ENCODE measurements at regions of chr17 and their contacts with region 1.

Region 1: DNA sequence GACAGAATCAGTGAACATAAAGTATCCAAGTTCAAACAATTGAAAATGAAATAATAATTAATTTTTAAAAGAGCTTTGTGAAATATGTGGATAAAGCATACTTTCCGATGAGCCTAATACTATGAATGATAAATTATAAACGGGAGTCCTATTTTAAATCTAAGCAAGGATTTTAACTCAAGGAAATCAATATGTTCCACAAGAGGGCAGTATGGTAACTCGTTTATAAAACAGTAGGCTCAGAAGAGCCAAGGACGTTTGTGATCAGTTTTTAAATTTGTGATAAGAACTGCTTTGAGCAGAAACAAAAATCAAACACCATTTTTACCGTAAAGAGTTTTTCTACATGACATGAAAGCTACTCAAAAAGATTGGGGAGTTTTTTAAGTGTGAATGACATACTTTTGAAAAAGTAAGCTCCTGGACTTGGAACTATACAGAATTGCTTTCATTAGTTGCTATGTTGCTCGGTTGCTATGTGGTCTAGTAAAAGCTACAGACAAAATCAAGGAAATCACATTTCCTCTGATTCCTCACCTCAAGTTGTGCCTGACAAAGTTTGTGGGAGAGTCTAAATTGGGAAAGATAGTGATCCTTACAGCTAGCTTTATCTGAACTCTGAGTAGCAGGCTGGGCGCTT is 11.8 kb upstream of the TEKT1 start:
- DNase-seq: no peak
- ATAC-seq: no peak
- H3K4me3 Mint-ChIP-seq: no peak overlapping the region
- H3K27ac Mint-ChIP-seq: no peak overlapping the region
- H3K4me1 Mint-ChIP-seq: peaks cover 8% of the 10 kb centered on the region
- H3K27me3 Mint-ChIP-seq: peaks cover 59% of the 10 kb centered on the region

Region 2: DNA sequence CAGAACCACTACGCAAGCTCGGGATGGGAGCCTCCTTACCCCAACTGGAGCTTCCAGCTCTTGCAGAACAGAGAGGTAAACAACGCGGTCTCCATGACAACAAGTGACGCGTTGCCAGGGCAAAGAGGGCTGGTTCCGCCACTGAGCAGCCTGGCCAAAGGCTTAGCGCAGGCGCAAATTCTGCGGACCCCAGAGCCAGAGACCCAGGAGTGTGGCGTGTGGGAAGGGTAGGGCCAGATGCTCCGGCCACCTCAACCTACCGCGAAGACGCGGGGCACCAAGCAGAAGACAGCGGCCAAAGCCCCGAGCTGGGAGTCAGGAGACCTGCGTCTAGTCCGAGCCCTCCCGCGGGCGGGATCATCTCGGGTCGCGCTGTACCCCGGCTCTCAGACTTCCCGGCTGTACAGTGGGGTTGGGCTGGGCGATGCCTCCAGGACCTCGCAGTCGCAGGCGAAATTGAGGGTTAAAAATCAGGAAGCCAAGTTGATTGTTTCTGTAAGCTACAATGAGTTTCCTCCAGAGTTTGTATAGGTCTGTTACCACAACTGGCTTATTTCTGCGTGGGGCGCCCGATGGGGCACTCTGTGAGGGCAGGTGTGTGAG is 11.6 kb before region 1 on chr17 and contains the start of gene TEKT1:
- CTCF ChIA-PET with region 1: interaction called, 22 read pairs
- POLR2A ChIA-PET with region 1: no interaction called
- DNase-seq: peak; percentile 75
- ATAC-seq: peak; percentile 89
- H3K4me3 Mint-ChIP-seq: peak within 1 kb of the TSS; percentile 52
- H3K27ac Mint-ChIP-seq: no peak within 1 kb of the TSS
- H3K4me1 Mint-ChIP-seq: peaks cover 2% of the 10 kb centered on the region
- H3K27me3 Mint-ChIP-seq: peaks cover 59% of the 10 kb centered on the region
- total RNA-seq, gene TEKT1: not detected

Region 3: DNA sequence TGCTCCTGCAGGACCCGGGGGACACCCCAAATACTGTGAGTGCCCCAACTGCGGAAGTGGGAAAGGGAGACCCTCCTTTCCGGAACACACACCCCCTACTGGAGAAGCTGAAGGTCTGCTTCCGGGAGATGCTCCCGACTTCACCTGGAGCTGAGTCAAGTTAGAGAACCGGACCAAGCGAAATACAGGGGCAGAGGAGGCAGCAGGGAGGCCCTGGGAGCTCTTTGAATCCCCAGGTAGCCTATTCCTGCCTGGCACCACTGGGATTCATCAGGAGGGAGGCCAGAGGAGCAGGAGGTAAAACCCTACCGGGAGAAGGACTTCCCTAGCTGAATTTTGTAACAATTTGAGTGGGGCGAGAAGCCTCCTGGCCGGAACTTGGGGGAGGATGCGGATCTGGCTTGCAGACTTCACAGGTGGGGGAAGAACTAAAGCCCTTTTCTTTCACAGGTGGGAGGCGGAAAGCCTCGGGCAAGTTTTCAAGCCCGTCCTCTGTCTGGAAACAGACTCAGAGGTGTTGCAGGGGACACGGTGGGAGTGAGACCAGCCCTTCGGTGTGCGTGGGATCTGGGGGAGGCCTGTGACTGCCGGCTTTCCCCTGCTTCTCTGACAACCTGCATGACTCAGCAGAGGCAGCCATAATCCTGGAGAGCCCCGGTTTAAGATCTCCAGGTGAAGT is 10.5 kb after region 1 on chr17:
- CTCF ChIA-PET with region 1: interaction called, 33 read pairs
- POLR2A ChIA-PET with region 1: no interaction called
- DNase-seq: peak; percentile 23
- ATAC-seq: peak; percentile 53
- H3K4me3 Mint-ChIP-seq: peak overlapping the region; percentile 69
- H3K27ac Mint-ChIP-seq: peak overlapping the region; percentile 26
- H3K4me1 Mint-ChIP-seq: peaks cover 9% of the 10 kb centered on the region
- H3K27me3 Mint-ChIP-seq: peaks cover 22% of the 10 kb centered on the region

Region 4: DNA sequence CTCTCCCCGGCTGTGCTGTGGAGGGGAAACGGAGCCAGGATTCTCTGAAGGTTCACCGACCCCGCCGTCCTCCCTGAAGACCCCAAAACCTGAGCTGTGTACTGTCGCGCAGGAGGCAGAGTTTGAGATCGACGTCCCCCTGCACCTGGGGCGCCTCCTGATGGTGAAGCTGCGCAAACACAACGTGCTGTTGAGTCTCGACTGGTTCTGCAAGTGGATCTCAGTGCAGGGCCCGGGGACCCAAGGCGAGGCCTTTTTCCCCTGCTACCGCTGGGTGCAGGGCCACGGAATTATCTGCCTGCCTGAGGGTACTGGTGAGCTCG is 50.8 kb after region 1 on chr17:
- CTCF ChIA-PET with region 1: interaction called, 19 read pairs
- POLR2A ChIA-PET with region 1: no interaction called
- DNase-seq: peak; percentile 45
- ATAC-seq: no peak
- H3K4me3 Mint-ChIP-seq: no peak overlapping the region
- H3K27ac Mint-ChIP-seq: no peak overlapping the region
- H3K4me1 Mint-ChIP-seq: no peaks in the 10 kb centered on the region
- H3K27me3 Mint-ChIP-seq: peaks cover 22% of the 10 kb centered on the region

Region 5: DNA sequence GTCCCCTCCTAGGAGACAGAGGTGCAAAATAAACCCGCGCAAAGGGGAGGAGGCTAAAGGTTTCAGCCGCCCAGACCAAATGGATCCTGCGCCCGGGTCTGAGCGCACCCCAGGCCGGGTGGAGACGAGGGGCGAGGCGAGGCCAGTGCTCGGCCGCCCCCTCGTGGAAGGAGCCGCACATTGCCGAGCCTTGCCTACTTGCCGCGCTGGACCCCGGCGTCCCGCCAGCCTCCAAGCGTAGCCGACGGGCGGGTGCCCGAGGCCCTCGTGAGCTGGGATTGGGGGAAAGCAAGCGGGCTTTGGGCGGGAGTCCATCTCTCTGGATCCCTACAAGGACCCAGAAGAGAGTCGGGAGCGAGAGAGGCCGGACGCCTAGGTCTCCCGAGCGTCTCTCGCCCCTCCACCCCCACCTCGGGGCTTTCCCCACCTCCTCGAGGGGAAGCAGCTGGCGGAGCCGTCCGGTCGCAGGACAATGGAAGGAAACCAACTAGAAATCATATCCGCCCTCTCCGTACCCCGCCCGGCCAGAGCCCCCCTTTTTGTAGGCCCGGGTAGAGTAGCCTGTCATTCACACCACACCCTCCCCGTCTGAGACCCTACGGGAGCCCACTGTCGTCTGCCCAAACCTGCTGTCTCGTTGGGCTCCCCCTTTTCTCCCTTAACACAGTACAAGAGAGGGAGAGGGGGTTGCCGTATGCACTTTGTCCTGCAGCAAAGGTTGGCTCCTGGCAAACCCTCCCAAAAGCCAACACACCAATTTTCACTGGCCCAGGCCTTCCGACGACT is 178.8 kb after region 1 on chr17:
- CTCF ChIA-PET with region 1: interaction called, 13 read pairs
- POLR2A ChIA-PET with region 1: no interaction called
- DNase-seq: peak; percentile 86
- ATAC-seq: peak; percentile 74
- H3K4me3 Mint-ChIP-seq: peak overlapping the region; percentile 8
- H3K27ac Mint-ChIP-seq: peak overlapping the region; percentile 55
- H3K4me1 Mint-ChIP-seq: peaks cover 73% of the 10 kb centered on the region
- H3K27me3 Mint-ChIP-seq: peaks cover 2% of the 10 kb centered on the region

Region 6: GRCh38 chr17:7136266-7136877 is 293.0 kb after region 1 on chr17:
- CTCF ChIA-PET with region 1: interaction called, 10 read pairs
- POLR2A ChIA-PET with region 1: no interaction called
- DNase-seq: peak; percentile 84
- ATAC-seq: no peak
- H3K4me3 Mint-ChIP-seq: no peak overlapping the region
- H3K27ac Mint-ChIP-seq: no peak overlapping the region
- H3K4me1 Mint-ChIP-seq: peaks cover 10% of the 10 kb centered on the region
- H3K27me3 Mint-ChIP-seq: peaks cover 4% of the 10 kb centered on the region